ENCODE measurements at regions of chr4 and their contacts with region 1.

Region 1: DNA sequence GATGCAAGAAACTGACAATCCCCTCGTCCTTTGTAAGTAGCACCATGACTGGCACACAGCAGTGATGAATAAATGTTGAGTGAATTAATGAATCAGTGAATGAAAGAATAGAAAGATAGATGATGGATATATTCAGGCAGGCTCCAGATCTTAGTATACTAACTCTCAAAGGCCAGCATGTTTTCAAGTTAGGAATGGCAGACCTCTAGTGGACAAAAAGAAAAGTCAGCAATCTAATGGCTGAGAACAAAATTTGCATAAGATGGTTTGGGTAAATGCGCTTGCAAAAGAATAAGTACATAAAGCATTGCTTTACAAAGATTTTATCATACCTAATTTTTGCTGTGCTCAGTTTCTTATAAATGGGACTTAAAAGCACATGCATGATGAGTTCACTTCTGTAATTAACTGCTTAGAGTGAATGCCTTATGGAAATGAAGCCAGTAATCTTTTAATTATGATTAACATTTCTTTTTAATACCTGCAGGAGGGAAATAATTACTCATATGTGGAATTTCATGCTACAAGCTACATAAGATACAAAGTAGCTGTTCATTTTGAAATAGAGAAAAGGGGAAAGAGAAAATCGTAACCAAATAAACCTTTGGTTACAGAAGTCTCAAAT is 126.9 kb upstream of the GPRIN3 start:
- DNase-seq: peak in 1 of 2 donors; percentile 72
- ATAC-seq: peak; percentile 60 to 85 (median 68)
- H3K4me3 ChIP-seq: no peak overlapping the region
- H3K4me3 Mint-ChIP-seq: no peak overlapping the region
- H3K27ac ChIP-seq: no peak overlapping the region
- H3K27ac Mint-ChIP-seq: no peak overlapping the region
- H3K4me1 ChIP-seq: no peaks in the 10 kb centered on the region
- H3K4me1 Mint-ChIP-seq: peaks cover 7 to 11% of the 10 kb centered on the region in 2 donors
- H3K27me3 ChIP-seq: no peaks in the 10 kb centered on the region
- H3K27me3 Mint-ChIP-seq: peaks cover 4 to 9% of the 10 kb centered on the region in 2 donors
- CTCF ChIP-seq: peak; percentile 77

Region 2: DNA sequence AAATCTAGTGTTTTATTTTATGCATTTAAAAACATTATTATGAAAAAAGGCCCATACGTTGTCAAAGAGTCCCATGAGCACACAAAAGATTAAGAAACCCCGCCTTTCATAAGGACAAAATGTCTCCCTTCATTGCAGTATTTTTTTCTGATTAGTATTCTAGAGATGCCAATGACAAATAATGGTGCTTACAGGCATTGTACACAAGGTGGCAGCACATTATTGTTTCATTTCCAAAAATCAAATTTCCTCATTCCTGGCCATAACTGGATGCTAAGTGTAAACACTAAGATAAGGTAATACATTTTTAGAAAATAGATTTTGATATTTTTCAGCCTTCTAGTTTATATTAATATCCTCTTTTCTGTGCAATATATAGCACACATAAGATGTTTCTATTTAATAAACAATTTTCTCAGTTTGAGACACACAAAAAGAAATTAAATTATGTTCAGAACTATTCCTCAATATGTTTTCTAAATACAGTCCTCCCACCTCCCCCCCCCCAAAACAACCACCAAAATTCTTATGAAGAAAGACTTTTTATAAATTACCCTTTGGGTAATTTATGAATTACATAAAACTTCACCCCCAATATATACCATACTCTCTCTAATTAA is 275.5 kb before region 1 on chr4:
- intact Hi-C with region 1: loop called (anchors 1 kb)
- DNase-seq: peak in 1 of 2 donors; percentile 61
- ATAC-seq: peak; percentile 59 to 76 (median 62)
- H3K4me3 ChIP-seq: no peak overlapping the region
- H3K4me3 Mint-ChIP-seq: no peak overlapping the region
- H3K27ac ChIP-seq: no peak overlapping the region
- H3K27ac Mint-ChIP-seq: no peak overlapping the region
- H3K4me1 ChIP-seq: no peaks in the 10 kb centered on the region
- H3K4me1 Mint-ChIP-seq: no peaks in the 10 kb centered on the region
- H3K27me3 ChIP-seq: no peaks in the 10 kb centered on the region
- H3K27me3 Mint-ChIP-seq: peaks cover 7 to 13% of the 10 kb centered on the region in 2 donors
- CTCF ChIP-seq: peak; percentile 74

Region 3: DNA sequence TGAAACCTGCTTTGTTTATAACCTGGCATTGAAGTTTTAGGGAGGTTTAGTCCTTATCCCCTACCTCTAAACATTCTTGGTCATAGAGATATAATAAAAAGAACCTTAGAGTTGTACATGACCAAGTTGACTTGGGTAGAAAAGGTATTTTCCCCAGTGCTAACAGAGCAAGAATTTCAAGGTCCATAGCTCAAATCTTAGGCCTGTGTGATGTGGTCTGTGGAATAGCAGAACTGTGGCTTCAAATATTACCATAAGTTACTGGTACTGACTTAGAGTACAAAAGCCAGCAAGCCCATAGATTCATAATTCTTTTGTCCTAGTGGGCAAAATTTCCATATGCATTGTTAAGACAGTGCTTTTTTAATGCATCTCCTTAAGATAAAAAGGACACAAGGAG is 218.1 kb before region 1 on chr4:
- intact Hi-C with region 1: no loop called
- DNase-seq: no peak
- ATAC-seq: no peak
- H3K4me3 ChIP-seq: no peak overlapping the region
- H3K4me3 Mint-ChIP-seq: no peak overlapping the region
- H3K27ac ChIP-seq: no peak overlapping the region
- H3K27ac Mint-ChIP-seq: no peak overlapping the region
- H3K4me1 ChIP-seq: no peaks in the 10 kb centered on the region
- H3K4me1 Mint-ChIP-seq: no peaks in the 10 kb centered on the region
- H3K27me3 ChIP-seq: no peaks in the 10 kb centered on the region
- H3K27me3 Mint-ChIP-seq: peaks cover 9 to 14% of the 10 kb centered on the region in 2 donors
- CTCF ChIP-seq: no peak

Region 4: DNA sequence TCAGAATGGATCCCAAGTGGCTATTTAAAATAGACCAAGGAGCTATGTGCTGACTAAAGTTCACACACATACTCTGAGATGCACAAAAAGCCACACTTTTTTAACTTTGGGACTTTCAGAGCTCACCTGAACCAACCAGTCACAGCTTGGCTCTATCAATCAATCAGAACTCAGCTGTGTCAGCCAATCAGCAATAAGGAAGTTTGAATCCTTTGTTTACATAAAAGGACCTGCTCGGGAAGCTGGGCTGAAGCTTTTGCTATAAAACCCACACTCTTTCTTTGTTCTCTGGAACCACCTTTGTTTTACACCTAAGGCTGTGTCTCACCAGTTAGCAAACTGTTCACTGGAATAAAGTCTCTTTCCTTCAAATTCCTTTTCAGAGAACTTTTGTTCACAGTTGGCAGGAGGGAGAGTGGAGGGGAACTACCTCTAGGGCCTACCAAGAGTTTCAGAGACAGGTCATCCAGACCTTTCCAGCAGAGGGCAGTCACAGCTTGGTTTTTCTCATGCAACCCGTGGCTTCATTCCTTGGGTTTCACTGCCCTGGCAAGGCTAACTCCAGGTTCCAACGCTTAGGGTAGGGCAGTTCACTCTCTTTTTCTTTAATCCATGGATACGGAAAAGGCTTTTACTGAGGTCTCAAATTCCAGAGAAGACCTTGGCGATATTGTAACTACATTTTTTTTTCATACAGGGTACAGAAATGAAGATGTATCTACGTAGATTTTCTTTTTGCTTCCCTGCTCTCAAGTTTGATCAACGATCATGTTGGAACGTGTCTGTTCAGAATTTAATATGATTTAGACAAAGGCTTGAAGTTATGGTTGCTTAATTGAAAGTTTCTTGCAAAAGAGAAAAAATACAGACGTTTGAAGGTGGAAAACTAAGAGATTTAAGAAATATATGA is 207.6 kb before region 1 on chr4:
- intact Hi-C with region 1: loop called (anchors 1 kb)
- DNase-seq: peak; percentile 58 to 89
- ATAC-seq: peak; percentile 87 to 98 (median 98)
- H3K4me3 ChIP-seq: no peak overlapping the region
- H3K4me3 Mint-ChIP-seq: no peak overlapping the region
- H3K27ac ChIP-seq: no peak overlapping the region
- H3K27ac Mint-ChIP-seq: no peak overlapping the region
- H3K4me1 ChIP-seq: no peaks in the 10 kb centered on the region
- H3K4me1 Mint-ChIP-seq: peaks cover 5 to 6% of the 10 kb centered on the region in 2 donors
- H3K27me3 ChIP-seq: no peaks in the 10 kb centered on the region
- H3K27me3 Mint-ChIP-seq: no peaks in the 10 kb centered on the region
- CTCF ChIP-seq: peak; percentile 84

Region 5: DNA sequence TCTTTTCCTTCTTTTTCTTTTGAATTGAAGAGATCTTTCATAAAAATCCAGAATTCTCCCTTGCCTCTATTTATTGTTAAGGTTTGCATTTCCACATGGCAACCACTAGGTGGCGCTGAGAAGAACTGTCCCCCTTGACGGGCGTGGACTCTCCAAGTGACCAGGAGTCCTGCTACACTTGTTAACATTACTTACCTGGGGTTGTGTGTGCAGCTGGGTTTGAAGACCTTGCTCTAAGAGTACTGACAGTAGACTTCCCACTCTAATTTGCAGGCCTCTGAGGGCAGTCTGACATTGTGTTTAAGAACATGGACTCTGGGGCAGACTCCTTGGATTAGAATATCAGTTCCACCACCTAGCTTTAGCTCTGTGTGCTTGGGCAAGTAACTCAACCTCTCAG is 179.6 kb before region 1 on chr4:
- intact Hi-C with region 1: loop called (anchors 10 kb)
- DNase-seq: peak; percentile 48 to 83
- ATAC-seq: peak; percentile 79 to 86 (median 81)
- H3K4me3 ChIP-seq: no peak overlapping the region
- H3K4me3 Mint-ChIP-seq: peak overlapping the region; percentile 49
- H3K27ac ChIP-seq: peak overlapping the region; percentile 49
- H3K27ac Mint-ChIP-seq: peak overlapping the region; percentile 74 to 77
- H3K4me1 ChIP-seq: peaks cover 27% of the 10 kb centered on the region
- H3K4me1 Mint-ChIP-seq: peaks cover 53 to 67% of the 10 kb centered on the region in 2 donors
- H3K27me3 ChIP-seq: no peaks in the 10 kb centered on the region
- H3K27me3 Mint-ChIP-seq: no peaks in the 10 kb centered on the region
- CTCF ChIP-seq: peak; percentile 90

Region 6: DNA sequence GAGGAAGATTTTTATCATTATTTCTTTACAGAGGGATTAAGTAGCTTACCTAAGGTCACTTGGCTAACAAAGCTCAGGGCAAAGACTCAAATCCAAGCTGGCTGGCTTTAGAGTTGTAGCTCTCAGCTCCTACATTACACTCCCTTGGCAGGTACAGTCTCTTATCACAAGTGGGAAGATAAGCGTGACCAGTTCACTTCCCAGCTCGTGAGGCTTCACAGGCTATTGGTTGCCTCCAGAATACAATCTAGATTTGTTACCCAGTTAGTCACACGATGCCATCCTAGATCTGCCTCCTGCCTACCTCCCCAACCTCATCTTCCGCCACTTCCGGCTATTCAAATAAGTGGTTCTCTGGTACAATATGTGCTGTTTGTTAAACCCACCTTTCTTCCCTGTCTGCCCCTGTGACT is 463.8 kb after region 1 on chr4:
- intact Hi-C with region 1: loop called (anchors 1 kb)
- DNase-seq: no peak
- ATAC-seq: peak; percentile 24 to 40 (median 25)
- H3K4me3 ChIP-seq: no peak overlapping the region
- H3K4me3 Mint-ChIP-seq: no peak overlapping the region
- H3K27ac ChIP-seq: no peak overlapping the region
- H3K27ac Mint-ChIP-seq: no peak overlapping the region
- H3K4me1 ChIP-seq: peaks cover 10% of the 10 kb centered on the region
- H3K4me1 Mint-ChIP-seq: peaks cover 11 to 12% of the 10 kb centered on the region in 2 donors
- H3K27me3 ChIP-seq: peaks cover 2% of the 10 kb centered on the region
- H3K27me3 Mint-ChIP-seq: no peaks in the 10 kb centered on the region
- CTCF ChIP-seq: no peak

Measured in natural killer cell (primary cell).